ENCODE measurements at regions of chr14 and their contacts with region 1.

Region 1: GRCh38 chr14:64986578-64987571 is at the start of gene FNTB:
- DNase-seq: peak; percentile 97
- H3K4me3 Mint-ChIP-seq: peak within 1 kb of the TSS; percentile 89
- H3K27ac Mint-ChIP-seq: peak within 1 kb of the TSS; percentile 96
- H3K4me1 Mint-ChIP-seq: peaks cover 42% of the 10 kb centered on the region
- H3K27me3 Mint-ChIP-seq: peaks cover 23% of the 10 kb centered on the region
- total RNA-seq, gene FNTB: 18.9 and 19.1 TPM in 2 replicates

Region 2: DNA sequence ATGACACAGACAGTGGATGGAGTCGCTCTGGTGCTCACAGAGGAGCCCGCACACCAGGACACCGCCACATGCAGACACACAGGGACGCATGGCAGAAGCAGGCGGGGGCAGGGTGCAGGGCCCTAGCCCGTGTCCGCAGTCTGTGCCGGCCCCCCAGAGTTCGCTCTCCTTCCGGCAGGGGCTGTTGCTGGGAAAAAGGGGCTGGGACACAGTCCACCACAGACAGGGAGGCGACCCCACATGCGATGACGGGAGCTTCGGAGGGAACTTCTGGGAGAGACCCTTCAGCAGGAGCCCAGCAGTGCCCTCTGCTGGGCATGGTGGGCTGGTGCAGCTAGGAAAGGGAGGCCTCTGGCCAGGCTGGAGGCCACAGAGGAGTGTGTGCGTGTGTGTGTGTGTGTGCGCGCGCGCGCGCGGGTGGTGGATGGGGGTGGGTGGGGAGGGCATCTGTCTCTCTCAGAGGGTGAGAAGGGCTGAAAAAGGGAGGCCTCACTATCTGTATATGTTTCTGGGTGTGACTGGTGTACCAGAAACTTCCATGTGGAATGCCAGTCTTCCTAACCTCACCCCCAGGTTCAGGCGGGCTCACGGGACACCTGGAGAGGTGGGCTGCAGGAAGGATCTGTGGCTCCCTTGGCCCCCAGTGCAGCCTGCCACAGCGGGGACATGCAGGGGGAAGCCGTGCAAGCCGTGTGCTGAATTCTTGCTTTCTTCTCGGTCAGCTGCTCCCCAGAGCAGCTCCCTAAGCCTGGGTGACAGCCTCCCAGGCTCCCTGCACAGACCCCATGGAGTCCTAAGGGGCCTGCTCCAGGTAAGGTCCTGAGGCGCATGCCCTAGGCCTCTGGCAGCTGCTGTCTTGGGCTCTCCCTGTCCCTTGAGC is 222.0 kb before region 1 on chr14:
- intact Hi-C with region 1: loop called (anchors 5 kb)
- DNase-seq: peak; percentile 92
- H3K4me3 Mint-ChIP-seq: peak overlapping the region; percentile 37
- H3K27ac Mint-ChIP-seq: no peak overlapping the region
- H3K4me1 Mint-ChIP-seq: peaks cover 38% of the 10 kb centered on the region
- H3K27me3 Mint-ChIP-seq: peaks cover 17% of the 10 kb centered on the region

Region 3: GRCh38 chr14:64855721-64856528 is 130.9 kb before region 1 on chr14:
- intact Hi-C with region 1: no loop called
- DNase-seq: no peak
- H3K4me3 Mint-ChIP-seq: no peak overlapping the region
- H3K27ac Mint-ChIP-seq: no peak overlapping the region
- H3K4me1 Mint-ChIP-seq: no peaks in the 10 kb centered on the region
- H3K27me3 Mint-ChIP-seq: peaks cover 29% of the 10 kb centered on the region

Region 4: DNA sequence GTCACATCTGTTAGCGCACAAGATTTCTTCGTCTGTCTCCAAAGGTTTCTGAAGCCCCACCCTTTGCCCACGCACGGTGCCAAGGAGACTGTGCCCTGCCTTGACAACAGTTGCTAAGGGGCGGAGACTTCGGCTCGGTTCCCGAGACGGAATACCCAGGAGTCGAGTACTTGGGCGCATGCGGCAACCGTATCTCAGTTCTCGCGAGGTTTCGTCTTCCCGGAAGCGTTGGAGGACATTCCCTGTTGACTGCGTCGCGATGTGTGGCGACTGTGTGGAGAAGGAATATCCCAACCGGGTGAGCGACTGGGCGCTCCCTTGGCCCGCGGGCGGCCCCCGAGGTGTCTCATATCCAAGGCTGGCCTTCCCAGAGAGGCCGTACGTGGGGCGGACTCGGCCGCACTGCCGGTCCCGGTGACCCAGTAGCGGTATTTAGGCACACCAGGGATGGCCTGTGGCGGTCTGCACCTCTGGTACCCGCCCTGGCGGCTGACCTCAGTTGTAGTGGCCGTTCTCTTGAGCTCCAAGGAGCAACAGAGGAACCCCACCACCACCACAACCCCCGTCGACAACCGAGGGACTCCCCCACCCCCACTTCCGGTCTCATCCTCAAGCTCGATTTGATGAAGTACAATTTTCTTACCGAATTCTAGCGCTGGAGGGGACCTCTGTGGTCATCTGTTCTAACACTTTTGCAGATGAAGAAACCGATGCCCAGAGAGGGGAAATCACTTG is 72.5 kb before region 1 on chr14 and contains the start of gene CHURC1:
- intact Hi-C with region 1: loop called (anchors 1 kb)
- DNase-seq: peak; percentile 99
- H3K4me3 Mint-ChIP-seq: peak within 1 kb of the TSS; percentile 85
- H3K27ac Mint-ChIP-seq: peak within 1 kb of the TSS; percentile 95
- H3K4me1 Mint-ChIP-seq: peaks cover 44% of the 10 kb centered on the region
- H3K27me3 Mint-ChIP-seq: peaks cover 14% of the 10 kb centered on the region
- total RNA-seq, gene CHURC1: 53.5 and 54.9 TPM in 2 replicates

Region 5: GRCh38 chr14:65003394-65003793 is 16.5 kb after region 1 on chr14:
- intact Hi-C with region 1: loop called (anchors 1 kb)
- DNase-seq: no peak
- H3K4me3 Mint-ChIP-seq: peak overlapping the region; percentile 7
- H3K27ac Mint-ChIP-seq: peak overlapping the region; percentile 70
- H3K4me1 Mint-ChIP-seq: peaks cover 35% of the 10 kb centered on the region
- H3K27me3 Mint-ChIP-seq: no peaks in the 10 kb centered on the region

Region 6: GRCh38 chr14:65102441-65103149 is 115.7 kb after region 1 on chr14 and contains the start of gene MAX:
- intact Hi-C with region 1: loop called (anchors 1 kb)
- DNase-seq: peak; percentile 99
- H3K4me3 Mint-ChIP-seq: peak within 1 kb of the TSS; percentile 91
- H3K27ac Mint-ChIP-seq: peak within 1 kb of the TSS; percentile 94
- H3K4me1 Mint-ChIP-seq: peaks cover 36% of the 10 kb centered on the region
- H3K27me3 Mint-ChIP-seq: peaks cover 7% of the 10 kb centered on the region
- total RNA-seq, gene MAX: 122 and 128 TPM in 2 replicates

Measured in activated CD4-positive, alpha-beta T cell treated with anti-CD3 and anti-CD28 coated beads, Interleukin-2, amount 10 ng/mL, durations not matched to agents 24 days and 14 days (primary cell).